Activated CD8-positive, alpha-beta T cell treated with anti-CD3 and anti-CD28 coated beads, Interleukin-2, amount 10 ng/mL, durations not matched to agents 7 days and 5 days (primary cell): ENCODE measurements at regions of chrX and their contacts with region 1.

Region 1: DNA sequence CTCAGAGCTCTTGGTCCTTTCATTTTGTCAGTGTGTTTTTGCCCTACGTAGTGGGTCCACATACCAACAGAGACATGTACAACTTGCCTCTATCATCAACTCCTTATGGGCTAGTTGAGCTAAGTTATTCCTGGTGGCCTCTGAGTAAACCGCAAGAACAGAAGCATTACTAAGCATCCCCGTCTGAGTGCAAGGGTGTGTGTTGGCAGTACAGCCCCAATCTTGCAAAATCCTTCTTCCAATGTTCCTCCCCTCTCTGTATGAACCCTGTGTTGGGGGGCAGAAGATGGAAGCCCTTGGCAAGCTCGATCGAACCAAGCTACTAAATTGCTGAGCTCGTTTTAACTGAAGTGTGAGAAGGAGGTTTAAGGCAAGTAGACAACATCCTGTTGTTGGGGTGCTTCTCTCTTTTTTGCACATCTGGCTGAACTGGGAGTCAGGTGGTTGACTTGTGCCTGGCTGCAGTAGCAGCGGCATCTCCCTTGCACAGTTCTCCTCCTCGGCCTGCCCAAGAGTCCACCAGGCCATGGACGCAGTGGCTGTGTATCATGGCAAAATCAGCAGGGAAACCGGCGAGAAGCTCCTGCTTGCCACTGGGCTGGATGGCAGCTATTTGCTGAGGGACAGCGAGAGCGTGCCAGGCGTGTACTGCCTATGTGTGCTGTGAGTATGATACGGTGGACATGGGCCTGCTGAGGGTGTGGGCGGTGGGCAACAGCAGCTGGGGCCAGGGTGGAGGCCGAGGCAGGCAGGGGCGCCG is at the start of gene SH2D1A:
- DNase-seq: peak; percentile 54
- ATAC-seq: peak; percentile 52
- H3K4me3 Mint-ChIP-seq: peak within 1 kb of the TSS; percentile 81
- H3K27ac Mint-ChIP-seq: peak within 1 kb of the TSS; percentile 96
- H3K4me1 Mint-ChIP-seq: peaks cover 48% of the 10 kb centered on the region
- H3K27me3 Mint-ChIP-seq: no peaks in the 10 kb centered on the region
- total RNA-seq, gene SH2D1A: 42.0 to 42.1 TPM

Region 2: DNA sequence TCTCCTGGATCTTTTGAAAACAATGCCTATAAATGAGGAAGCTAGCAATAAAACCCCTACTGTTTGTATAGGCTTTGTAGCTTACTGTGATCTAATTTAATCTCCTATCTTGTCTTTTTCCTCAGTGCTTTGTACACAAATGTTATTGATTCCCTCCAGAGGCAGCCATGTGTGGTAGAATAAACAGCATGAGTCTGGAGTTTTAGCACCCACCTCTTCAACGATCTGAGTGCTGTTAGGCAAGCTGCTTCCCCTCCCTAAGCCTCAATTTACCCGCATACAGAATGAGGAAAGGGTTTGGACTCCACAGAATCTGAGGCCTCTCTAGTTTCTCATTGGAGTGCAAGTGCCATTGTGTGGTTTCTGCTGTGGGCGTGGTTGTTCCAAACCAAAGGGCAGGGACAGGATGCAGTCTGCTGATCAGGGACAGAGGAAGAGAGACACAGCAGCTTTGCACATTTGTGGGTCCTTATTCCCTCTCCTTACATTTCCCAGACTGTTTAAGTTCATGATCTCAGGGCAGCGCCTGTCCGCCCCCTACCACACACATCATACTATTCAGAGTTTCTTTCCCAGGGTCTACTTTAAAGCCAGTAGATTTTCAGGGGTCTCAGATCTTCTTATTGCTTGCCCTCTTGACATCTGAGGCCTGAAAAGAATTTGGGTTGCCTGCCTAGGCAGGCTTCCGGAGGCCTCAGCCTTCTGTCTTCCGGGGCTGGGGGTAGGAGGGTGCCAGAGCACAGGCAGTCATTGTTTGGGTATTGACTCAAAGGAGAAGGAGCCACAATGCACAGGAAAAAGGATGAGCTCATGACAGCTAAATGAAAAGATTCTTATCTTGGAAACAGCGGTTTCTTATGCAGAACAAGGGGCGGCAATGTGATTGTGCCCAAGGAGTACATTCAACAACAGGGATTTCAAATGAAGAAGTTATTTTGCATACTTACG is 128.7 kb before region 1 on chrX:
- CTCF ChIA-PET with region 1: interaction called, 6 read pairs
- POLR2A ChIA-PET with region 1: interaction called, 21 read pairs
- DNase-seq: peak; percentile 76
- ATAC-seq: peak; percentile 89
- H3K4me3 Mint-ChIP-seq: peak overlapping the region; percentile 52
- H3K27ac Mint-ChIP-seq: peak overlapping the region; percentile 95
- H3K4me1 Mint-ChIP-seq: peaks cover 86% of the 10 kb centered on the region
- H3K27me3 Mint-ChIP-seq: no peaks in the 10 kb centered on the region

Region 3: DNA sequence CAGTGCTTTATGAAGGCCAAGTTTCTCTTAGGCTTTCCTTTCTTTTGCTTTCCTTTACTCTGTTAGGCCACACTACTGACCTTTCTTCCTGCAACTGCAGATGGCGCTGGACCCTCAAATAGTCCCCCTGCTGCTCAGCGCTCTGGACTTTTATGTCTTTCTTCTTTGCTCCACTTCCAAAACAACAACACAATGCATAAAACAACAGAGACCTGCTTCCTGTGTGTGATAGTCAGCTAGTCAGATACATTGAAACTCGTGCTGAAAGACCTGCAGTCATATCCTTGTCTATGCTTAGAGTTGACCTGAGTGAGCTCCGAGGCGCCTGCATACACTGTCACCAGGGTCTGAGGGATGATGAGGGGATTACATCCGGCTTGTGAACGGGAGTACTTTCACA is 122.8 kb before region 1 on chrX:
- CTCF ChIA-PET with region 1: interaction called, 6 read pairs
- POLR2A ChIA-PET with region 1: interaction called, 21 read pairs
- DNase-seq: peak; percentile 51
- ATAC-seq: peak; percentile 63
- H3K4me3 Mint-ChIP-seq: peak overlapping the region; percentile 53
- H3K27ac Mint-ChIP-seq: peak overlapping the region; percentile 86
- H3K4me1 Mint-ChIP-seq: peaks cover 61% of the 10 kb centered on the region
- H3K27me3 Mint-ChIP-seq: no peaks in the 10 kb centered on the region

Region 4: DNA sequence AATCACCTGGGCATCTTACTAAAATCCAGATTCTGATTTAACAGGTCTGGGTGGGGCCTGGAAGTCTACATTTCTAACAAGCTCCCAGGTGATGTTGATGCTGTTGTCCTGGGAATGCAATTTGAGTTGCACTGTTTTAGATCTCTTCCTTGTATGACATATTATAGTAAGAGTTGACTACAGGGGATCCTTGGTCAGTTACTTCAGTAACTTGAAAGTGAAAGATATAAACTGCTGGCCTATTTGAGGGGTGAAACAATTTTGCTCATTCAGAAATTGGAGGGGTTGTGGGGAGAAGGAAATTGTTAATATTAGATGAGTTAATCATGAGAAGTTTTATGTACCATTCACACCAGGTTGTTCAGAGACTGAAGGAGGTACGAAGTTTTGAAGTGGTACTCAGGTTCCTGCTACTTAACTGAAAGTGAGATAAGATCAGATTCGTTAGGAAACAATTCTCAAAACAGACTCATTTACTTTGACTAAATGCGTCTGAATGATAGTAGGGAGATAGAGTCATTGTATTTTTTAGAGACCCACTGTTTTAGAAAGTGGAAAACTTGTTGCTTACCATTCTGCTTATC is 12.6 kb after region 1 on chrX:
- CTCF ChIA-PET with region 1: interaction called, 5 read pairs
- POLR2A ChIA-PET with region 1: interaction called, 22 read pairs
- DNase-seq: no peak
- ATAC-seq: peak; percentile 76
- H3K4me3 Mint-ChIP-seq: peak overlapping the region; percentile 76
- H3K27ac Mint-ChIP-seq: peak overlapping the region; percentile 92
- H3K4me1 Mint-ChIP-seq: peaks cover 56% of the 10 kb centered on the region
- H3K27me3 Mint-ChIP-seq: no peaks in the 10 kb centered on the region